Endothelial cell of umbilical vein (primary cell): ENCODE measurements at regions of chrX and their contacts with region 1.

Region 1: GRCh38 chrX:130165703-130166502 is at the start of gene AIFM1:
- DNase-seq: peak; percentile 98
- H3K4me3 ChIP-seq: peak within 1 kb of the TSS; percentile 60 to 91 (median 72)
- H3K27ac ChIP-seq: peak within 1 kb of the TSS; percentile 80
- H3K4me1 ChIP-seq: peaks cover 15% of the 10 kb centered on the region
- H3K27me3 ChIP-seq: no peaks in the 10 kb centered on the region
- CTCF ChIP-seq: no peak
- POLR2A ChIP-seq: peak; percentile 88
- total RNA-seq, gene AIFM1: 29.7 and 30.6 TPM in 2 replicates

Region 2: GRCh38 chrX:130086447-130087206 is 79.3 kb before region 1 on chrX:
- CTCF ChIA-PET with region 1: no interaction called
- POLR2A ChIA-PET with region 1: no interaction called
- dilution Hi-C with region 1: no loop called
- intact Hi-C with region 1: loop called (anchors 2 kb)
- DNase-seq: no peak
- H3K4me3 ChIP-seq: no peak overlapping the region
- H3K27ac ChIP-seq: peak overlapping the region; percentile 94
- H3K4me1 ChIP-seq: peaks cover 44% of the 10 kb centered on the region
- H3K27me3 ChIP-seq: no peaks in the 10 kb centered on the region
- CTCF ChIP-seq: no peak
- POLR2A ChIP-seq: no peak

Region 3: GRCh38 chrX:130120746-130121504 is 45.0 kb before region 1 on chrX:
- CTCF ChIA-PET with region 1: interaction called, 5 read pairs
- POLR2A ChIA-PET with region 1: interaction called, 3 read pairs
- dilution Hi-C with region 1: no loop called
- intact Hi-C with region 1: loop called (anchors 2 kb)
- DNase-seq: peak; percentile 75
- H3K4me3 ChIP-seq: peak overlapping the region in 1 of 3 experiments; percentile 30
- H3K27ac ChIP-seq: peak overlapping the region; percentile 82
- H3K4me1 ChIP-seq: peaks cover 40% of the 10 kb centered on the region
- H3K27me3 ChIP-seq: no peaks in the 10 kb centered on the region
- CTCF ChIP-seq: peak; percentile 57 to 62
- POLR2A ChIP-seq: peak; percentile 41

Region 4: GRCh38 chrX:130145123-130145522 is 20.8 kb before region 1 on chrX:
- CTCF ChIA-PET with region 1: no interaction called
- POLR2A ChIA-PET with region 1: no interaction called
- dilution Hi-C with region 1: no loop called
- intact Hi-C with region 1: loop called (anchors 1 kb)
- DNase-seq: no peak
- H3K4me3 ChIP-seq: no peak overlapping the region
- H3K27ac ChIP-seq: no peak overlapping the region
- H3K4me1 ChIP-seq: no peaks in the 10 kb centered on the region
- H3K27me3 ChIP-seq: no peaks in the 10 kb centered on the region
- CTCF ChIP-seq: no peak
- POLR2A ChIP-seq: no peak

Region 5: GRCh38 chrX:130196466-130196865 is 30.6 kb after region 1 on chrX:
- CTCF ChIA-PET with region 1: interaction called, 3 read pairs
- POLR2A ChIA-PET with region 1: no interaction called
- dilution Hi-C with region 1: no loop called
- intact Hi-C with region 1: loop called (anchors 1 kb)
- DNase-seq: no peak
- H3K4me3 ChIP-seq: no peak overlapping the region
- H3K27ac ChIP-seq: no peak overlapping the region
- H3K4me1 ChIP-seq: no peaks in the 10 kb centered on the region
- H3K27me3 ChIP-seq: no peaks in the 10 kb centered on the region
- CTCF ChIP-seq: no peak
- POLR2A ChIP-seq: no peak

Region 6: DNA sequence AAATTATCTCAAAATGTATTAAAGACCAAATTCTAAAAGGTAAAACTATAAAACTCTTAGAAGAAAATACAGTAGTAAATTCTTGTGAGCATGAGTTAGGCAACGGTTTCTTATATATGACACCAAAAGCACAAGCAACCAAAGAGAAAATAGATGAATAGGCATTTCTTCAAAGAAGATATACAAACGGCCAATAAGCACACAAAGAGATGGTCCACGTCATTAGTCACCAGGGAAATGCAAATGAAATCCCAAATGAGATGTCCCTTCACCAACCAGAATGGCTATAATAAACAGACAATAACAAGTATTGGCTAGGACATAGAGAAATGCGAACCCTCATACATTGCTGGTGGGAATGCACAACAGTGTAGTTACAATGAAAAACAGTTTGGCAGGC is 50.4 kb after region 1 on chrX:
- CTCF ChIA-PET with region 1: no interaction called
- POLR2A ChIA-PET with region 1: no interaction called
- dilution Hi-C with region 1: no loop called
- intact Hi-C with region 1: no loop called
- DNase-seq: peak; percentile 1
- H3K4me3 ChIP-seq: no peak overlapping the region
- H3K27ac ChIP-seq: no peak overlapping the region
- H3K4me1 ChIP-seq: no peaks in the 10 kb centered on the region
- H3K27me3 ChIP-seq: no peaks in the 10 kb centered on the region
- CTCF ChIP-seq: no peak
- POLR2A ChIP-seq: no peak